Sigmoid colon (tissue), 7 donors: ENCODE measurements at regions of chr1 and their contacts with region 1.

Region 1: GRCh38 chr1:100351095-100351891 is 1.0 kb upstream of the CDC14A start:
- DNase-seq: peak; percentile 90
- H3K4me3 ChIP-seq: peak overlapping the region; percentile 70 to 98 (median 93)
- H3K27ac ChIP-seq: peak overlapping the region; percentile 90 to 96 (median 92)
- H3K4me1 ChIP-seq: peaks cover 0 to 27% (median 23%) of the 10 kb centered on the region in 4 donors
- H3K27me3 ChIP-seq: no peaks in the 10 kb centered on the region
- CTCF ChIP-seq: peak in 1 of 4 experiments; percentile 17
- EP300 ChIP-seq: no peak
- POLR2A ChIP-seq: peak; percentile 15 to 40

Region 2: DNA sequence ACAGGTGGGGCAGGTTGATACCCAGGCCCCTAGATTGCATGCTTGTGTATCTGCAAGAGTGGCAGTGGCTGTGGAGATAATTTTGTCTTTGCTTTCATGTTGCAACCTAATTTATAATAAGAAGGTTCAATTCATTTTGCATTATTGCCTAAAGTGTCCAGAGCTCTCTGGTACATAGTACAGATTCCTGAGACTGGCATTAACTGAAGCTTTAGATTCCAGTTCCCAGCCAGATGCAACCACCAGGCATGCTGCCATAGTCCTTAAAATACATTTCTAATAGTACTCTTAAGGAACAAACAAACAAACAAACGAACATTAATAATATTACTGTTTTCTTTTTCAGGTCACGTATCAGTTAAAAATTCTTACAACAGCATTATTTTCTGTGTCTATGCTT is 344.6 kb before region 1 on chr1:
- intact Hi-C with region 1: no loop called
- DNase-seq: no peak
- H3K4me3 ChIP-seq: no peak overlapping the region
- H3K27ac ChIP-seq: no peak overlapping the region
- H3K4me1 ChIP-seq: no peaks in the 10 kb centered on the region
- H3K27me3 ChIP-seq: no peaks in the 10 kb centered on the region
- CTCF ChIP-seq: no peak
- EP300 ChIP-seq: no peak
- POLR2A ChIP-seq: no peak

Region 3: DNA sequence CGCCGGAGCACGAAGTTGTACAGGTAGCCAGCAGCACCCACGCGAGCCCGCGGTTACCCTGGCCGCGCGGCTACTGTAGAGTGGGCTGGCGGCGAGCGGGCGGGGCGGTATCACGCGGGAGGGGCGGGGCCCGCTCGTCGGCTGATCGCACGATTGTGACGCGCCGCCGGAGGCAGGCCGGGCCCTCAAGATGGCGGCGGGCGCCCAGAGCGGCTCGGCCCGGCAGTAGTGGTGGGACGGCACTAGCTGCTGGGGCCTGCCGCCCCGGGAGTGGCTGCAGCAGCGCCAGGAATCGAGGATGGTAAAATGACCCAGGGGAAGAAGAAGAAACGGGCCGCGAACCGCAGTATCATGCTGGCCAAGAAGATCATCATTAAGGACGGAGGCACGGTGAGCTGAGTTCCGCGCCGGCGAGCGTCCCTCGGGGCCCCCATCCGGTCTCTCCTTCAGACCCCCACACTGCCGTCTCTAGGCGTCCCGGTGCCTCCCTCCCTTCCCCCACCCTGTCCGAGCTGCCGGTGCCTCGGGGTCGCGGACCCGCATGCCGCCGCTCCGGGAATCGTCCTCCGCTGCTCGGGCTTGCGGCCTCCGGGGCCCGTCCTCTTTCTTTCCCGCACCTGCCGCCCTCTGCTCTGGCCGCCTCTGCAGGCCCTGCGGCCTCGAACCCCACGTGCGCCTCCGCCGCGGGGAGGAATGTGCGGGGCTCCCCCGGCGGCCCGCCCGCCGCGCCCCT is 313.2 kb before region 1 on chr1:
- intact Hi-C with region 1: loop called (anchors 5 kb)
- DNase-seq: peak; percentile 94
- H3K4me3 ChIP-seq: peak overlapping the region; percentile 76 to 91 (median 82)
- H3K27ac ChIP-seq: peak overlapping the region; percentile 96 to 99 (median 98)
- H3K4me1 ChIP-seq: peaks cover 0 to 44% (median 43%) of the 10 kb centered on the region in 4 donors
- H3K27me3 ChIP-seq: no peaks in the 10 kb centered on the region
- CTCF ChIP-seq: no peak
- EP300 ChIP-seq: peak in 1 of 4 donors; percentile 4
- POLR2A ChIP-seq: peak; percentile 87 to 90

Region 4: DNA sequence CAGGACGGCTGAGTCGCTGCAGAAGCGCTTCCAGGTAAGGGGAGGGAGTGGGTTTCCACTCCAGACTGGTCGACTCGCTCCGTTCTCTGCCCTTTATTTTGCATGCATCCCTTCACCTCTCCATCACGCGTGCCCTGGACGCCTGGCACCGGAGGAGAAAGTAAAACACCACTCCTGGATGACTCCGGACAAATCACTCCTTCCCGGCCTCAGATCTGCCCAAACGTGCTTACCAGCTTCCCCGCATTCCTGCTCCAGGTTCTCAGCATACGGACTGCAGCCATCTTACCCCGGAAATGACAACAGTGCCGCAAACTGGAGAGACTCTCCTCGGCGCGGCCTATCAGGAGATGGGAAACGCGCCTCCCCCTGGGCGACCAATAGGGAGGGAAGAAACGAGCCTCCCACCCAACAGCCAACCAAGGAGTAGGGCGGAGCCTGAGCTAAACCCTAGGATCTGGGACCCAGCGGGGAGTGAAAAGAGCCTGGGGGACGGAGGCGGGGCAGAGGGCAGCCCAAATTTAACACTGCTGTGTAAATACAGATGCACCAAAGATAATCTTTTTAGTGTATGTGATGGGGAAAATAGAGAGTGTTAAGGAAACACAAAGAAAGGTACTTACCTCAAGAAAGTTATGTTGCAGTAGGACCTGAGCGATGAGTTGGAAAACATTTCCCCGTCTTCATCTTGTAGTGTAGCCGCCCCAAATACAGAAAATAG is 101.6 kb before region 1 on chr1 and contains the start of gene DBT:
- intact Hi-C with region 1: loop called (anchors 2 kb)
- DNase-seq: peak; percentile 99
- H3K4me3 ChIP-seq: peak within 1 kb of the TSS; percentile 81 to 91 (median 88)
- H3K27ac ChIP-seq: peak within 1 kb of the TSS; percentile 87 to 94 (median 93)
- H3K4me1 ChIP-seq: peaks cover 0 to 16% (median 8%) of the 10 kb centered on the region in 4 donors
- H3K27me3 ChIP-seq: no peaks in the 10 kb centered on the region
- CTCF ChIP-seq: no peak
- EP300 ChIP-seq: no peak
- POLR2A ChIP-seq: peak; percentile 80 to 84
- total RNA-seq, gene DBT: 8.8 to 14.3 (median 11.1) TPM

Region 5: GRCh38 chr1:100443811-100444571 is 92.7 kb after region 1 on chr1:
- intact Hi-C with region 1: loop called (anchors 5 kb)
- DNase-seq: peak; percentile 66
- H3K4me3 ChIP-seq: peak overlapping the region in 2 of 4 donors; percentile 1 to 7
- H3K27ac ChIP-seq: peak overlapping the region; percentile 29 to 69 (median 58)
- H3K4me1 ChIP-seq: peaks cover 0 to 16% (median 8%) of the 10 kb centered on the region in 4 donors
- H3K27me3 ChIP-seq: no peaks in the 10 kb centered on the region
- CTCF ChIP-seq: peak in 1 of 4 experiments; percentile 5
- EP300 ChIP-seq: peak in 1 of 4 donors; percentile 45
- POLR2A ChIP-seq: no peak

Region 6: DNA sequence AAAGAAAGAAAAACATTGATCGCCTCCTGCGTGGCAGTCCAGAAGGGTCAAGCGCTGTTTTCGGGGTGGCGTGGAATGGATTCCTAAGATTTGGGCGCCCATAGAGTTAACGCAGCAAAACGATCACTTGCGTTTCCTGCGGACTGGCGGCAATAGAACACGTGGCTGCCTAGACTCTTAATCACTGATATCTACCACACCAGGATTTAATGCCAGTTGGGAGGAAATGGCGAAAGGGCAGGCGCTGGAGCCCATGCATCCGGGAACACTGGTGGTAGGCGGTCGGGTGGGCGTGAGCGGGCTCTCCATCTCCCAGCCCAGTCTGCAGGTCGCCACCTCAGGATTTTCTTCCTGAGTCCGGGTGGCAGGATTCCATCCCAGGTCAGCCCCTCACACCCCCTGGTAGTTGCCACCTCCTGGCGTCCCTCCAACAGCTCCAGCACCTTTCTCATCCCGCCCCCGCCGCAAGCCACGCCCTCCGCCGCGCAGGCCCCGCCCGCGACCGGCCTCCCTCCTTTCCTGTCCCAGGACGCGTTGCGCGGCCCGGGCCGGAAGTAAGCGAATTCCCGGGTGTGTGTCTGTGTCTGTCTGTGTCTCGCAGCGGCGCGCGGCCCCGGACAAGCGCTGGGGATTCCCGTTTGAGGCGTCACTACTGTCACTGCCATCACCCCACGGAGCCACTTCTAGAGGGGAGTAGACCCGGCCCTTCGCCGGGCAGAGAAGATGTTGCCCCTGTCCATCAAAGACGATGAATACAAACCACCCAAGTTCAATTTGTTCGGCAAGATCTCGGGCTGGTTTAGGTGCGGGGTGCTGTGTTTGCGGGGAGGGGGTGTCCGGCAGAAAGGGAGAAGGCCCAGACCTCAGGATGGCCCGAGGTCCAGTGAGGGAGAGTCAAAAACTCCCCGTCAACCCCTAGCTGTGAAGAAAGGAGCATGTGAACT is 544.5 kb after region 1 on chr1 and contains the start of gene SLC30A7:
- intact Hi-C with region 1: loop called (anchors 5 kb)
- DNase-seq: peak; percentile 96
- H3K4me3 ChIP-seq: peak within 1 kb of the TSS; percentile 60 to 85 (median 72)
- H3K27ac ChIP-seq: peak within 1 kb of the TSS; percentile 89 to 97 (median 93)
- H3K4me1 ChIP-seq: peaks cover 0 to 31% (median 18%) of the 10 kb centered on the region in 4 donors
- H3K27me3 ChIP-seq: no peaks in the 10 kb centered on the region
- CTCF ChIP-seq: no peak
- EP300 ChIP-seq: no peak
- POLR2A ChIP-seq: peak; percentile 38 to 63
- total RNA-seq, gene SLC30A7: 10.9 to 16.7 (median 14.1) TPM